Activated CD4-positive, alpha-beta T cell treated with anti-CD3 and anti-CD28 coated beads, Interleukin-2, amount 10 ng/mL, durations not matched to agents 7 days and 5 days (primary cell): ENCODE measurements at regions of chr15 and their contacts with region 1.

Region 1: DNA sequence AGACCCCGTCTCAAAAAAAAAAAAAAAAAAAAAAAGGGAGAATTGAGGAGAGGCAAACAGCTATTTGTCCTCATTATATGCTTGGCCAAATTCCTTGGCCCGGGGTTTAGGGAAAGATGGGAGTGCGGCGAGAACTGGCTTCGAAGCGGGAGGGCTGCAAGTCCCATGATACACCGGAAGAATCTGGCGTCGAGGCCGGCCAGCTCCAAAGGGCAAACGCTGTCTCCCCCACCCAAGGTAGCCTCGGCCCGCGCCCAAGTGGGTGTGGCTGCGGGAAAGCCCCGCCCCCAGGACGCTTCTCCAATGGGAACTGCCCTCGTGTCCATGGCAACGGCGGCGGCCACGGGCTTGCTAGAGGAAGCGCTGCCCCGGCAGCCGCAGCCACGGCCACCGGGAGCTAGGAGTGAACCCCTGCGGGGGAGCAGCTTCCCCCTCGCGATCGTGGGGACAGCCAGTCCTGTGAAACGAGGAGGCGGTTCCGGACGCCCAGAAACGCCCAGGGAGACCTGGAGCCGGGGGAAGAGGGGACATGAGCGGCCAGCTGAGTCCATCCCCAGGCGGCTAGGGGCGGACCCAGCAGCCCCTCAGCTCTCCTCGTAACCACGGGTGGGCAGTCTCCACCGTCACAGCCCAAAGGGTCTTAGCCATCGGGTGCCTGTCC is at the start of gene TTLL13:
- DNase-seq: peak; percentile 78
- H3K4me3 Mint-ChIP-seq: peak within 1 kb of the TSS; percentile 55
- H3K27ac Mint-ChIP-seq: no peak within 1 kb of the TSS
- H3K4me1 Mint-ChIP-seq: peaks cover 16% of the 10 kb centered on the region
- H3K27me3 Mint-ChIP-seq: no peaks in the 10 kb centered on the region
- total RNA-seq, gene TTLL13: 0.45 to 0.87 TPM

Region 2: GRCh38 chr15:90020021-90020735 is 229.2 kb before region 1 on chr15:
- CTCF ChIA-PET with region 1: no interaction called
- POLR2A ChIA-PET with region 1: no interaction called
- DNase-seq: no peak
- H3K4me3 Mint-ChIP-seq: no peak overlapping the region
- H3K27ac Mint-ChIP-seq: peak overlapping the region; percentile 13
- H3K4me1 Mint-ChIP-seq: peaks cover 62% of the 10 kb centered on the region
- H3K27me3 Mint-ChIP-seq: no peaks in the 10 kb centered on the region

Region 3: DNA sequence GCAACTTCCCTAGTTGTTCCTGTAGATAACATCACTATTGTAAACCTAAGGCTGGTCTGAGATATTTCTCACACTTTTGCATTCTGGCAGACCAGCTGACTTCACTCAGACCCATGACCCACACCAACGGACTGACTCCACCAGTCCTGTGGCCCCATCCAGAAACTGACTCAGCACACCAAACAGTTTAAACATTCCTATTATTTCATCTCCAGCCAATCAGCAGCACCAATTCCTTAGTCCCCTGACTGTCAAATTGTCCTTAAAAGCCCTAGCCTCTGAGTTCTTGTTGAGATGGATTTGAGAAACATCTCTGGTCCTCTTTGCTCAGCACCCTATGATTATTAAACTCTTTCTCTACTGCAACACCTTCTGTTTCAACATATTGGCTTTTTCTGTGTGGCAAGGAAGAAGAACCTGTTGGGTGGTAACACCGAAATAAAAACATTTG is 134.9 kb before region 1 on chr15:
- CTCF ChIA-PET with region 1: no interaction called
- POLR2A ChIA-PET with region 1: no interaction called
- DNase-seq: no peak
- H3K4me3 Mint-ChIP-seq: no peak overlapping the region
- H3K27ac Mint-ChIP-seq: no peak overlapping the region
- H3K4me1 Mint-ChIP-seq: no peaks in the 10 kb centered on the region
- H3K27me3 Mint-ChIP-seq: peaks cover 4% of the 10 kb centered on the region

Region 4: DNA sequence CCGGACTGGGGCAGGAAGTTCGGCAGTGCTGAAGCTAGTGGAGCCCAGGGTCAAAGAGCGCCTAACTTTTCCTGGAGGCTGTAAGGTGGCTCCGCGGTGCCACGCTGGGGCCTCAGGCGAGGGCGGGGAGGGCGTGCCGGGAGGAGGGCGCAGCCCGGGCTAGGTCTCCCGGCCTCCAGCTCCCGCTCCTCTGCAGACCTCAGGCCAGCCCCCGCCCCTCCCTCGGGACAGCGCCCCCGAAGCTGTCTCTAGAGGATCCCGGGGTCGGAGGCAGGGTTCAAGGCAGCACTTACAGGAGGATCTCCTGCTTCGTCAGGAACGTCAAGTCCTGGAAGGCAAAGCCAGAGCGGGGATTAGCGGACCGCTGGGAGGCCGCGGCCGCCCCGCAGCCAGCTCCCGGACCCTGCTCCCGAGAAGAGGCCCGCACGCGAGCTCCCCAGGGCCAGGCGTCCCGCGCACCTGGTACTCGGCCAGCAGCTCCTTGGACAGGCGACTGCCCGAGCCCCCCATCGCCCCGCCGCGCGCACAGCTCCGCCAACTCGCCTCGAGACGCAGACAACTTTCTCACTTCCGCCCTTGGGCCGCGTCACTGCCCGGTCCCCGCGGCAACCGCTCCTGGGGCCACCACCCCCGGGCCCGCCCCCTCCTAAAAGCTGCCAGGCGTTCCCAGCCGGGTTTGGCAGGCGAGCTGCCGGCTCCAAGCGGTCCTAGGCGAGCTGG is 15.8 kb before region 1 on chr15 and contains the start of gene CIB1:
- CTCF ChIA-PET with region 1: interaction called, 17 read pairs
- POLR2A ChIA-PET with region 1: no interaction called
- DNase-seq: peak; percentile 96
- H3K4me3 Mint-ChIP-seq: peak within 1 kb of the TSS; percentile 98
- H3K27ac Mint-ChIP-seq: peak within 1 kb of the TSS; percentile 97
- H3K4me1 Mint-ChIP-seq: peaks cover 60% of the 10 kb centered on the region
- H3K27me3 Mint-ChIP-seq: no peaks in the 10 kb centered on the region
- total RNA-seq, gene CIB1: 75.4 to 83.5 TPM